Tibial artery (tissue), 4 donors: ENCODE measurements at regions of chr1 and their contacts with region 1.

Region 1: GRCh38 chr1:16958503-16958902 is 21.9 kb downstream of the MFAP2 start:
- DNase-seq: no peak
- H3K4me3 ChIP-seq: no peak overlapping the region
- H3K27ac ChIP-seq: no peak overlapping the region
- H3K4me1 ChIP-seq: peaks cover 0 to 16% (median 5%) of the 10 kb centered on the region in 4 donors
- H3K27me3 ChIP-seq: no peaks in the 10 kb centered on the region
- CTCF ChIP-seq: no peak

Region 2: DNA sequence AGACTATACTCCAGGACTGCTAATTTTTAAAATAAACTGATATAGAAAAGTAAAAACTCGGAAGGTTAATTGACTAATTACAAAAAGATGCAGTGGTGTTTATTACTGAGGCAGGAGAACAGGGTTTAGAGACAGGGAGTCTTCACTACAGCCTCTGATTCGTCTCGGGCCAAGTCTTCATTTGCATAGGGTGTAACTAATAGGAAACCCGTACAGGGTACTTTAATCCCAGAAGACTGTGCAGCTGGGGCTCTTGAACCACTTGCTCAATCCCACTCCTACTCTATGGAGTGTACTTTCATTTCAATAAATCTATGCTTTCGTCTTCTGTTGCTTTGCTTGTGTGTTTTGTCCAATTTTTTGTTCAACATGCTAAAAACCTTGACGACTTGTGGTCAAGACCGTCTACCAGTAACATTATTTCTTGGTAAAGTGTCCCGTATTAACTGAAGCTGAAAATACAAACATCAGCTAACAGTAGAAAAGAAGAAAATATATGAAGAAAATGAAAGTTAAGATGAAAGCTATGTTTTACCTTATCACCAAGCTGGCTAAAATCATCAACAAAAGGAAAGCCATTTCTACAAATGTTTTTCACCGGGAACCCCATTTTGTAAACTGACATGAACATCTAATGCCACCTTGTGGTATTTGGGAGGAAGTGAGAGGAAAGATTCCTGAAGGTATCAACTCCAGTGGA is 87.3 kb after region 1 on chr1:
- intact Hi-C with region 1: loop called (anchors 5 kb)
- DNase-seq: no peak
- H3K4me3 ChIP-seq: peak overlapping the region in 1 of 2 donors; percentile 1
- H3K27ac ChIP-seq: peak overlapping the region in 1 of 2 donors; percentile 5
- H3K4me1 ChIP-seq: peaks cover 0 to 12% (median 8%) of the 10 kb centered on the region in 4 donors
- H3K27me3 ChIP-seq: no peaks in the 10 kb centered on the region
- CTCF ChIP-seq: peak; percentile 82 to 86